ENCODE measurements at regions of chr20 and their contacts with region 1.

Region 1: DNA sequence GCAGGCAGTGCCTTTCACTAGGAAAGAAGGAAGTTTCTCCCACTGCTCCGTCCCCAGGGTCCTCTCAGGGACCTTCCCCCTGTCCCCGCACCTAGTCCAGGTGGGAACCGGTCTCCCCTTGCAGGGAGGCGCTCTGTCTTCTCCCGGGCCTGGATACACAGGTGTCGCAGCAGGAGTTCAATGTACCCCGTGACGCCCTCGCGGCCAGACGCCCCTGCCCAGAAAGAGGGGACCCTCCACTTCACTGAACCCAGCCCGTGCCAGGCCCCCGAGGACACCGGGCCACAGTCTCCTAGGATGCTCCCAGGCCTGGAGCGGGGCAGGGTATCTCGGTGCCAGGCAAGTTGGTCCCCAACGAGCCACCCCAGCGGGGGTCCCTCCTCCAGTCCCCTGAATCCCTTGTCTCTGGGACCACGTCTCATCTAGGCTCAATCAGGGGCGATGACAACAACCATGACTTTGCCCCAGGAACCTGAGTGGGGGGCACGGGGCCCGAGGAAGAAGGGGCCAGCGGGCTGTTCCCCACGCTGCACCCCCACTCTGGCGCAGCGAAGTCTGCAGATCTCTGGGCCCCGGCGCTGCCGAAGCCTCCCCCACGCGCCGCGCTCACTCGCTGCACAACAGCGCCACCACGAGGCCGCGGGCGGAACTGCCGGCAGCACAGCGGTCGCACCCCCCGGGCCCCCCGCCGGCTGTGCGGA is 103.0 kb downstream of the EDN3 start:
- DNase-seq: no peak
- H3K4me3 ChIP-seq: peak overlapping the region; percentile 8 to 24
- H3K27ac ChIP-seq: no peak overlapping the region
- H3K4me1 ChIP-seq: peaks cover 24% of the 10 kb centered on the region
- H3K27me3 ChIP-seq: no peaks in the 10 kb centered on the region
- CTCF ChIP-seq: peak; percentile 75 to 92 (median 88)
- POLR2A ChIP-seq: no peak

Region 2: DNA sequence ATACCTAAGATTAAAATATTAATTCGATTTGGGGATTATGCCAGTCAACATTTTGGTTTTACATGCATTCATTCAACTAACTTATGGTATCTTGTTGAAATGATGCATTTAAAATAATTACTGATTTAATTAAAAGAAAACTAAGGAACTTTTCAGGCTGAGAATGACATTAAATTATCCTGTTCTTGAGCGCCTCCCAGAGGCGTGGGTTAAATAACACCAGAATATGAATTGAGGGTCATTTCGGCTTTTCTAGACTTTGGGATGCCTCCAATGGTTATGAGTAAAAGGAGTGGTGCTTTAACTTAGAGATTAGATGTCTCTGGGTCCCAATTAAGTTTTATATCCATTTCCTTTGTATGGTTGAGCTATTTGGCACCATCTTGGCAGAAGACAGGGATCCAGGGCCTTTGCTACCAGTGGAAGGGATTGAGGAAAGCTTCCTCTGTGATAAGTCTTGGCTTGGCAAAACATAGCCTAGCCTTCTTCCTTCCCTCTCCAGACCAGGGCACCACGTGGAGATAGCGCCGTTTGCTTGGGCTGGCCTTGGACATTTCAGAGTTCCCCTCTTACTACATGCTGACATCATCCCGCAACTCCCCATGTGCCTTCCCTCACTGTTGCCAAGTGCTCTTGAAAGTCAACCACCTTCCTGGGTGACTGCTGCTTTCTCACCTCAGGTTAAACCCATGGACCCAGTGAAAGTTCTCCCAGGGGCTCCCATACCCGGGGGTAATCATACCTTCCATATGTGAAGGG is 522.2 kb before region 1 on chr20:
- intact Hi-C with region 1: loop called (anchors 5 kb)
- DNase-seq: peak; percentile 70 to 72
- H3K4me3 ChIP-seq: no peak overlapping the region
- H3K27ac ChIP-seq: no peak overlapping the region
- H3K4me1 ChIP-seq: no peaks in the 10 kb centered on the region
- H3K27me3 ChIP-seq: no peaks in the 10 kb centered on the region
- CTCF ChIP-seq: no peak
- POLR2A ChIP-seq: no peak

Measured in vagina (tissue), 2 donors.